Tibial artery (tissue), 4 donors: ENCODE measurements at regions of chr6 and their contacts with region 1.

Region 1: GRCh38 chr6:17836298-17836697 is 129.6 kb upstream of the NUP153 start:
- DNase-seq: no peak
- H3K4me3 ChIP-seq: no peak overlapping the region
- H3K27ac ChIP-seq: no peak overlapping the region
- H3K4me1 ChIP-seq: no peaks in the 10 kb centered on the region
- H3K27me3 ChIP-seq: no peaks in the 10 kb centered on the region
- CTCF ChIP-seq: no peak

Region 2: DNA sequence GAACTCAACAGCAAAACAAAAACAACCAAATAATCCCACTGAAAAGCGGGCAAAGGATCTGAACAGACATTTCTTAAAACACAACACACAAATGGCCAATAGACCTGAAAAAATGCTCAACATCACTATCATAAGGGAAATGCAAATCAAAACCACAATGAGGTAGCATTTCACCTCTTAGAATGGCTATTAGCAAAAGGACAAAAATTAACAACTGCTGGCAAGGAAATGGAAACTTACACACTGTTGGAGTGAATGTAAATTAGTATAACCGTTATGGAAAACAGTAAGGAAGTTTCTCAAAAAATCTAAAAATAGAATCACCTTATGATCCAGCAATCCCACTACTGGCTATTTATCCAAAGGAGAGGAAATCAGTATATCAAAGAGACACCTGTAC is 215.3 kb before region 1 on chr6:
- intact Hi-C with region 1: no loop called
- DNase-seq: no peak
- H3K4me3 ChIP-seq: no peak overlapping the region
- H3K27ac ChIP-seq: no peak overlapping the region
- H3K4me1 ChIP-seq: no peaks in the 10 kb centered on the region
- H3K27me3 ChIP-seq: no peaks in the 10 kb centered on the region
- CTCF ChIP-seq: no peak

Region 3: GRCh38 chr6:18122124-18123093 is 286.1 kb after region 1 on chr6 and contains the start of gene NHLRC1:
- intact Hi-C with region 1: loop called (anchors 5 kb)
- DNase-seq: peak; percentile 91 to 94
- H3K4me3 ChIP-seq: peak within 1 kb of the TSS; percentile 58 to 60
- H3K27ac ChIP-seq: peak within 1 kb of the TSS; percentile 55 to 68
- H3K4me1 ChIP-seq: peaks cover 0 to 24% (median 14%) of the 10 kb centered on the region in 4 donors
- H3K27me3 ChIP-seq: no peaks in the 10 kb centered on the region
- CTCF ChIP-seq: peak; percentile 98